CD4-positive, alpha-beta memory T cell (primary cell): ENCODE measurements at regions of chr10 and their contacts with region 1.

Region 1: DNA sequence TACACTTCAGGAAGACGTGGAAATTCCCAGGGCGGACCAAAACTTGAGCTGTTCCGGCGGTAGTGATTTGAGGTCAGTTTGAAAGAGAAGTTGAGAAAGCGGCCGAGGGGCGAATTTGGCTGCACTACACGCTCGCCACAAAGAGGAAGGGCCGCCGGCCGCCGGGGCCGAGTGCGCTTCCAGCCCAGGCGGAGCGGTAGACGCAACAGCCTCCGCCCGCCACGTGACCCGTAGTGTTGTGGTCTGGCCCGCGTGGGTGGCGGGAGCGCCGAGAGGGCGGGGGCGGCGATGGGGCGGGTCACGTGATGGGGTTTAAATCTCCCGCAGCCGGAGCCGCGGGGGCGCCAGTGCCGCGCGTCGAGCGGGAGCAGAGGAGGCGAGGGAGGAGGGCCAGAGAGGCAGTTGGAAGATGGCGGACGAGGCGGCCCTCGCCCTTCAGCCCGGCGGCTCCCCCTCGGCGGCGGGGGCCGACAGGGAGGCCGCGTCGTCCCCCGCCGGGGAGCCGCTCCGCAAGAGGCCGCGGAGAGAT is at the start of gene SIRT1:
- DNase-seq: peak; percentile 90 to 93 (median 92)
- H3K4me3 ChIP-seq: peak within 1 kb of the TSS; percentile 36 to 55
- H3K4me3 Mint-ChIP-seq: peak within 1 kb of the TSS; percentile 90 to 98 (median 94)
- H3K27ac ChIP-seq: peak within 1 kb of the TSS; percentile 55
- H3K27ac Mint-ChIP-seq: peak within 1 kb of the TSS; percentile 95 to 98 (median 96)
- H3K4me1 ChIP-seq: peaks cover 40% of the 10 kb centered on the region
- H3K4me1 Mint-ChIP-seq: peaks cover 19 to 53% (median 27%) of the 10 kb centered on the region in 4 donors
- H3K27me3 ChIP-seq: no peaks in the 10 kb centered on the region
- H3K27me3 Mint-ChIP-seq: no peaks in the 10 kb centered on the region
- total RNA-seq, gene SIRT1: 57.1 to 58.8 TPM

Region 2: GRCh38 chr10:67849331-67850011 is 34.9 kb before region 1 on chr10:
- CTCF ChIA-PET with region 1: interaction called, 23 read pairs
- POLR2A ChIA-PET with region 1: interaction called, 18 read pairs
- intact Hi-C with region 1: loop called (anchors 1 kb)
- DNase-seq: peak; percentile 87 to 93 (median 90)
- H3K4me3 ChIP-seq: peak overlapping the region; percentile 70 to 98
- H3K4me3 Mint-ChIP-seq: peak overlapping the region; percentile 90 to 99 (median 96)
- H3K27ac ChIP-seq: peak overlapping the region; percentile 85
- H3K27ac Mint-ChIP-seq: peak overlapping the region; percentile 85 to 99 (median 97)
- H3K4me1 ChIP-seq: peaks cover 8% of the 10 kb centered on the region
- H3K4me1 Mint-ChIP-seq: peaks cover 2 to 17% (median 7%) of the 10 kb centered on the region in 4 donors
- H3K27me3 ChIP-seq: no peaks in the 10 kb centered on the region
- H3K27me3 Mint-ChIP-seq: no peaks in the 10 kb centered on the region

Region 3: GRCh38 chr10:68074775-68075549 is 190.6 kb after region 1 on chr10 and contains the start of gene HERC4:
- CTCF ChIA-PET with region 1: no interaction called
- POLR2A ChIA-PET with region 1: interaction called, 6 read pairs
- intact Hi-C with region 1: loop called (anchors 1 kb)
- DNase-seq: peak; percentile 88 to 92 (median 89)
- H3K4me3 ChIP-seq: peak within 1 kb of the TSS; percentile 53 to 99
- H3K4me3 Mint-ChIP-seq: peak within 1 kb of the TSS; percentile 95 to 99 (median 98)
- H3K27ac ChIP-seq: peak within 1 kb of the TSS; percentile 98
- H3K27ac Mint-ChIP-seq: peak within 1 kb of the TSS; percentile 91 to 98 (median 95)
- H3K4me1 ChIP-seq: peaks cover 39% of the 10 kb centered on the region
- H3K4me1 Mint-ChIP-seq: peaks cover 30 to 48% (median 39%) of the 10 kb centered on the region in 4 donors
- H3K27me3 ChIP-seq: no peaks in the 10 kb centered on the region
- H3K27me3 Mint-ChIP-seq: no peaks in the 10 kb centered on the region
- total RNA-seq, gene HERC4: 104 to 117 TPM

Region 4: DNA sequence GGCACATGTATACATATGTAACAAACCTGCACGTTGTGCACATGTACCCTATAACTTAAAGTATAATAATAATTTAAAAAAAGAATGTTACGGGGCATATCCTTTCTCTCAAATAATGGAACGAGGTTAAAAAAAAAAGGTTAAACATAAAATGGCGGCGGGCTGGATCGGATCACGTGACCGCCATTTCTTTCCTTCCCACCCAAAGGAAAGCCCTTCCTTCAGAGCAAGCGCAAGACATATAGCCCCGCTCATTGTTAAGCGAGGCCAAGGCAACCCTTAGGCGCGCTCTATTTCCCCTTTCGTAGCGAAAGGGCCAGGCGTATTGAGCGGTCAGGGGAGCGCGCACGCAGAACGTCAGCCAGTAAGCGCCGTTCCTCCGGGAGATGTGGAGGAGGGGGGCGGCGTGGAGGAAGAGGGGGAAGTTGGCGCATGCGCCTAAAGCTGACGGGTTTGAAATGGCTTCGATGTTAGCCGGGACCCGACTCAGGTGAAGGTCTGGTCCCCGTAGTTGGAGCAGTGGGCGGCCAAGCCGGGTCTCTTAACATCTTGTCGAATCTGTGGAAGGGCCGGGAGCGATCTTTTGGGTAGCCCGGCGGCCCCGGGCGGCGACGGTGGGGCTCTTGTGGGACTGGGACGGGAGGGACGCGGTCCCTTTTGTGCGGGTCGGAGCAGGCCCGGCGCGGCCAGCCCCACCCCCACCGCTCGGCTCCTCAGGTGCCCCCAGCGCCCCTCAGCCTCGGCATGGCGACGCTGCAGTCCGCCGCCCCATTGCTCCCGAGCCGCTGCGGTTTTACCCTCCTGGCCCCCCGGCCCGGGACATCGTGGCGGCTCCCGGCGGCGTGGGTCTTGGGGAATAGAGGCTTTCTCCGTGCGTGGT is 836.7 kb after region 1 on chr10 and contains the start of gene CCAR1:
- CTCF ChIA-PET with region 1: no interaction called
- POLR2A ChIA-PET with region 1: no interaction called
- intact Hi-C with region 1: loop called (anchors 10 kb)
- DNase-seq: peak; percentile 95 to 97 (median 97)
- H3K4me3 ChIP-seq: peak within 1 kb of the TSS; percentile 26 to 84
- H3K4me3 Mint-ChIP-seq: peak within 1 kb of the TSS; percentile 94 to 99 (median 98)
- H3K27ac ChIP-seq: peak within 1 kb of the TSS; percentile 94
- H3K27ac Mint-ChIP-seq: peak within 1 kb of the TSS; percentile 98 to 100 (median 99)
- H3K4me1 ChIP-seq: peaks cover 10% of the 10 kb centered on the region
- H3K4me1 Mint-ChIP-seq: peaks cover 13 to 23% (median 16%) of the 10 kb centered on the region in 4 donors
- H3K27me3 ChIP-seq: no peaks in the 10 kb centered on the region
- H3K27me3 Mint-ChIP-seq: no peaks in the 10 kb centered on the region
- total RNA-seq, gene CCAR1: 96.3 to 97.3 TPM